Dendritic cell treated with granulocyte-macrophage colony-stimulating factor and Interleukin-4, amounts not matched to agents 40 ng/mL and 50 ng/mL, for 4 days (primary cell): ENCODE measurements at regions of chr16 and their contacts with region 1.

Region 1: GRCh38 chr16:88977018-88977811 is at the start of gene CBFA2T3:
- H3K4me3 Mint-ChIP-seq: peak within 1 kb of the TSS; percentile 97
- H3K27ac Mint-ChIP-seq: peak within 1 kb of the TSS; percentile 93
- H3K4me1 Mint-ChIP-seq: peaks cover 61% of the 10 kb centered on the region
- H3K27me3 Mint-ChIP-seq: peaks cover 63% of the 10 kb centered on the region

Region 2: DNA sequence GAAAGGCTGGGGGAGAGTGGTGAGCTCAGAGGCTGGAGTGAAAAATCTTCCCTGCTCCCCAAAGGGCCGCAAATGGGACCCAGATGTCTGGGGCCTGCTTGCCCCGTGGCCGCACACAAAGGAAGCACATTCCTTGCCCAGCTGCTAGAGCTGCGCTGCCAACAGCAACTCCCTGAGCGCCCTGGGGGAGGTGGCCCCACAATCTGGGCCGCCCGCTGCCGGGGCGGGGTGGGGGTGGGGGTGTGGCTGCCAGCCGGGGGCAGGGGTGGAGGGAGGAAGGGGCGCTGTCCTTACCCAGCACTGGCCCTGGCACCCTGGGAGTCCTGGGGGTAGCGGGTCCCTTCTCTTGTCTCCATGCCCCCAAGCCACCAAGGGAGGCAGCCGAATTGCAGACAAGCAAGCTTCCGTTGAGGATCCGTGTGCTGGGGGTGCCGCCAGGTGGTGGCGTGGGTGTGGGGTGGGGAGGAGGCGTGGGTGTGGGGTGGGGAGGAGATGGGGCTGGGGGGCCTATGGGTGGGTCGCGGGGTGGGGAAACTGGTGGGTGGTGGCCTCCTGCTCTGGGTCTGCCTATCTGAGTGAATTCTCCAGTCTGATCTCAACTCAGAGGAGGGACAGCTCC is 62.4 kb before region 1 on chr16:
- intact Hi-C with region 1: no loop called
- H3K4me3 Mint-ChIP-seq: no peak overlapping the region
- H3K27ac Mint-ChIP-seq: no peak overlapping the region
- H3K4me1 Mint-ChIP-seq: peaks cover 18% of the 10 kb centered on the region
- H3K27me3 Mint-ChIP-seq: no peaks in the 10 kb centered on the region

Region 3: GRCh38 chr16:88957887-88958577 is 19.2 kb before region 1 on chr16:
- intact Hi-C with region 1: loop called (anchors 2 kb)
- H3K4me3 Mint-ChIP-seq: peak overlapping the region; percentile 70
- H3K27ac Mint-ChIP-seq: peak overlapping the region; percentile 83
- H3K4me1 Mint-ChIP-seq: peaks cover 68% of the 10 kb centered on the region
- H3K27me3 Mint-ChIP-seq: peaks cover 44% of the 10 kb centered on the region

Region 4: GRCh38 chr16:89115216-89115861 is 138.1 kb after region 1 on chr16:
- intact Hi-C with region 1: loop called (anchors 10 kb)
- H3K4me3 Mint-ChIP-seq: peak overlapping the region; percentile 85
- H3K27ac Mint-ChIP-seq: peak overlapping the region; percentile 94
- H3K4me1 Mint-ChIP-seq: peaks cover 57% of the 10 kb centered on the region
- H3K27me3 Mint-ChIP-seq: no peaks in the 10 kb centered on the region